ENCODE measurements at regions of chr3 and their contacts with region 1.

Region 1: DNA sequence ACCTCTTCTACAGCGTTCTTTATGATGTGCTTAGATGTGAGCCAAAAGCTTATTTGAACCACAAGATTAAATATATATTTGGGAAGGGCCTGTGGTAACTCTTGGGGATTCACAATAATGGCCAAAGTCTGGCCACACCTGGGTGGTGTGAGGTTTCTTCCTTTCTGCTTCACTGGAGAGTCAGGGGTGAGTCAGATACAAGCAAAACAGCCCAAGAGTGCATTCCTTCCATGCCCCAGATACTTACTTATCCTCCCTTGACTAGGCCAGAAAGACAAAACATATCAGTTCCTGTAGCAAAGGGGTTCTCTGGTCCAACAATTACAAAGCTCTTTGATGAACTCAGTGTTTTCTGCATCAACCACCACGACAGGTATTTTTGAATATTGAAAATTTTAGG is 941 bp downstream of the ZBED2 start:
- DNase-seq: peak; percentile 47
- H3K4me3 ChIP-seq: no peak overlapping the region
- CTCF ChIP-seq: no peak

Region 2: DNA sequence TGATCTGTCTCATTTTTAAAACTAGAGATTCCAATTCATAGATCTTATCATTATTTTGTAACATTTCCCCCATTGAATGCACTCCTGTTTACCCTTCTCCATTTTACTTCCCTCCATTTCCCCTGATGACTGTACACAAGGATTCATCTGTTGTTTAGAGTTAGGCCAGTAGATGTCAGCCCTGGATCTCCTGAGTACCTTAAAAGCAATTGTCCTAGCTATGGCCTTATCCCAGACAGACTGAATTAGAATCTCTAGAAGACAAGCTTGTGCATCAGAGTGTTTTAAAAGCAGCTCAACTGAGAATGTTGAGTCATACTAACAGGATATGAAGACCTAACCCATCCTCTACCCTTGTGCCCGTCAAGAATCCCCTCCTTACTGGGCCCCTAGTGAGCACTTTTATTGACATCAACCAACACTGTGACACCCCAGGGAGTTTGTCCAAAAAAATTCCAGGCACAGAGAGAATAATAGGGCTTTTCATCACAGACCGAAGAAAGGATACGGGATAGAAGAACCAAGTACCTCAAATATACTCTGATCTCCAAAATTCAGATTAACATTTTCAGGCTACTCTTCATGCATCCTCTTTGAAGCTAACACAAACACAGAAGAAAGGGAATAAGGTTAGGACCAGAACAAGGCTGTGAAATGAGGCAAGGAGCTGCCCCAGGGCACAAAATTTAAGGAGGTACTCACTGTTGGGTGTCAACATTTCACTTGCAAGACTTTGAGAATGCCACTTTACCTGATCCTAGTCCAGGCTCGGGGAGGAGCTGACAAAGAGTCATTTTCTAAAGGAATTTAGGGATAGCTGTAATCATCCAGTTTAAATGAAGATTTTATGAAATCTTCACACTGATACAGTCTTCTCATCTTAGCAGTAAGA is 16.2 kb before region 1 on chr3:
- CTCF ChIA-PET with region 1: interaction called, 16 read pairs
- POLR2A ChIA-PET with region 1: no interaction called
- DNase-seq: peak; percentile 70
- H3K4me3 ChIP-seq: no peak overlapping the region
- CTCF ChIP-seq: peak; percentile 71

Region 3: DNA sequence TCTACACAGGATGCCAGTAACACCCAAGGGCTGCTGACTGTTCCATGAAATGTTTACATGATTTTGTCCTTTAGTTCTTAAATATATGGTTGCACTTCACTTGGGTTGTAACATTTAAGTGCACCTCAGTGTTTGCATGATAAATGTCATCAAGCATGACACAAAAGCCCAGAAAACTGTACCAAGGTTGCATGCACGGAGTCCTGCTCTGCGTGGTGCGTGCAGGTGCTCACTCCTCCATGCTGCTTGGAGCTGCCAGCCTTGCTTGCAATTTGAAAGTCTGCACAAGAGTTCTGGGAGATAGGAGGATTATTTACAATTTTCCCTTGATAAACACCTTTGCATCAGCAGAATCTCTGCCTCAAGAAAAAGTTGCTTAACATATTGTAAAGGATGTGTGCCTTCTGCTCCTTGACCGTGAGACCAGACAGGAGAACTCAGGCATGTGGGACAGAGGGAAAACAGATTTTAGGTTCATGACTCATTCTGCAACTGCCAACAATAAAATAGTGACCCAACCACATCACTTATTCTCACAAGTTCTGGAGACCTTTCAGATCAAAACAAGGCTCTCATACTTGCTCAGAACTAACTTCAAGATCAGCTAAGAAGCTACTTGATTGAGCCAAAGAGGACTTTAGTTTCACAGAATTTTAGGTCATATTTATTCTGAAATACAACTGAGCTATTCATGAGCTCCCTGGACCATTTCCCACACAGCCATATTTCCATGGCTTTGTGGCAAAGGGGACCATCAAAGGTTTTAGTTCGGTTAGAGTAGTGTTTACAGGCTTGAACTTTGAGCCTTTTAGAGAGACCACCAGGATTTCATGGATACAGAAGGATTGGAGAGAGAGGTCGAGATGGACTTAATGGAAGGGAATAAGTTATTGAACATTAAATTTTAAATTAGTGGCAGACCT is 129.3 kb after region 1 on chr3:
- CTCF ChIA-PET with region 1: no interaction called
- POLR2A ChIA-PET with region 1: no interaction called
- DNase-seq: peak; percentile 66
- H3K4me3 ChIP-seq: no peak overlapping the region
- CTCF ChIP-seq: no peak